ENCODE measurements at regions of chr6 and their contacts with region 1.

Region 1: DNA sequence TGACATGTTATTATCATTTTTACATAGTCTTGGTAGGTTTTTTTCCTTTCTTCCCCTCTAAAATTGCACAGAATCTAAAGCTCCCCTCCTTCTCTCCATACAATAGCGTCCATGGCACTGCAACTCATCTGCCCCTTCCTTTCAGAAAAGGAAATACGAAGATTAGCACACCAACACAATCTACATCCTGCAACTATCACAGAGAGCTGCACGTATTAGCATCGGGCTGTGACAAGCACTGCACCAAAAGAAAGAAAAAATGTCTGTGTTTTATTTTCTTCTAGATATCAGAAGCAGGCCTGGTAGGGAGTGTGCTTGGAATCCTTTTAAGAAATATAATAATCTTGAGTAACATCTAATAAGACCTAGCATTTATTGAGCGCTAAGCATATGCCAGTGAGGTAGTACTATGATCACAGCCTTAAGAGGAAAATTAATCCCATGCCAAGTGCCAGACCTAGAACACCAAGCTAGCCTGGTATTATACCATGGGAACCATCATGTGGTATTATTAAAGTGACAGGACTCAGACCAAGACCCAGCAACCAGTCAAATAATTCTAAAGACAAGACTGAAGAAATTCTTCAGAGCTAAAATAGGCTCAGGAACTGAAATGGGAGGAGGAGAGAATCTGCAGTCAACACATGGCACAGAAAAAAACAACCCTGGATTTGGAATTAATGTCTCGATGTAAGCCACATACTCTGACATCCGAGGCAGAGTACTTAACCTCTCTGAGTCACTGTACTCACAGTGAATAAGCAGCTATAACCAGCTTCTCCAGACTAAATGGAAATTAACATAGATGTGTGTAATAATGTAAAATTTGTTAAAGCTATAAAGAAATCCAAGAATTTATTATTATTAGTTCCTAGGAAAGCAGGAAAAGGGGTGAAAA is 124.3 kb downstream of the IPCEF1 start:
- DNase-seq: peak; percentile 65
- ATAC-seq: peak; percentile 84
- H3K4me3 ChIP-seq: no peak overlapping the region
- H3K27ac ChIP-seq: no peak overlapping the region
- H3K4me1 ChIP-seq: no peaks in the 10 kb centered on the region
- H3K27me3 ChIP-seq: no peaks in the 10 kb centered on the region; the same call in 1 of the 2 replicates
- CTCF ChIP-seq: no peak

Region 2: GRCh38 chr6:154247119-154247861 is 15.0 kb after region 1 on chr6:
- CTCF ChIA-PET with region 1: no interaction called
- POLR2A ChIA-PET with region 1: no interaction called
- intact Hi-C with region 1: no loop called
- DNase-seq: no peak
- ATAC-seq: no peak
- H3K4me3 ChIP-seq: no peak overlapping the region
- H3K27ac ChIP-seq: no peak overlapping the region
- H3K4me1 ChIP-seq: no peaks in the 10 kb centered on the region
- H3K27me3 ChIP-seq: peaks cover 20% of the 10 kb centered on the region; the same call in 1 of the 2 replicates
- CTCF ChIP-seq: no peak

Region 3: DNA sequence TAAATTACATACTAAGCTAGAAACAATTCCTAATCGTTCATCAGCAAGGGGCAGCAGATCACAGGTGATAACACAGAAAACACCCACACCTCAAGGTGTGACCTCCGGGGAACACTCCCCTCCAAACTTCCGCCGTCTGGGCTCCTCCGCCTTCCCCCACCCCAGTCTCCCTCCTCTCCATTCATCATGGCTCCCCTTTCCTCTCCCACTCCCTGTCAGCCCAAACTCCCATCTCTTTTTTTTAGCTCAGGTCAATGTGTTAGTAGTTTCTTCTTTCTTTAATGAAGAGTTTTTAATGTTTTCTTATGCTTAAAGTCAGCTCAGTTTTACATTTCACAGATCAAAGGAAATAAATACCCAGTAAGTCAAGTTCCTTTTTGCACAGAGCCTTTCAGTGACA is 257.6 kb after region 1 on chr6:
- CTCF ChIA-PET with region 1: no interaction called
- POLR2A ChIA-PET with region 1: interaction called, 16 read pairs
- intact Hi-C with region 1: no loop called
- DNase-seq: no peak
- ATAC-seq: no peak
- H3K4me3 ChIP-seq: no peak overlapping the region
- H3K27ac ChIP-seq: no peak overlapping the region
- H3K4me1 ChIP-seq: peaks cover 36% of the 10 kb centered on the region
- H3K27me3 ChIP-seq: no peaks in the 10 kb centered on the region
- CTCF ChIP-seq: no peak